Heart left ventricle (tissue), 16 donors: ENCODE measurements at regions of chr17 and their contacts with region 1.

Region 1: DNA sequence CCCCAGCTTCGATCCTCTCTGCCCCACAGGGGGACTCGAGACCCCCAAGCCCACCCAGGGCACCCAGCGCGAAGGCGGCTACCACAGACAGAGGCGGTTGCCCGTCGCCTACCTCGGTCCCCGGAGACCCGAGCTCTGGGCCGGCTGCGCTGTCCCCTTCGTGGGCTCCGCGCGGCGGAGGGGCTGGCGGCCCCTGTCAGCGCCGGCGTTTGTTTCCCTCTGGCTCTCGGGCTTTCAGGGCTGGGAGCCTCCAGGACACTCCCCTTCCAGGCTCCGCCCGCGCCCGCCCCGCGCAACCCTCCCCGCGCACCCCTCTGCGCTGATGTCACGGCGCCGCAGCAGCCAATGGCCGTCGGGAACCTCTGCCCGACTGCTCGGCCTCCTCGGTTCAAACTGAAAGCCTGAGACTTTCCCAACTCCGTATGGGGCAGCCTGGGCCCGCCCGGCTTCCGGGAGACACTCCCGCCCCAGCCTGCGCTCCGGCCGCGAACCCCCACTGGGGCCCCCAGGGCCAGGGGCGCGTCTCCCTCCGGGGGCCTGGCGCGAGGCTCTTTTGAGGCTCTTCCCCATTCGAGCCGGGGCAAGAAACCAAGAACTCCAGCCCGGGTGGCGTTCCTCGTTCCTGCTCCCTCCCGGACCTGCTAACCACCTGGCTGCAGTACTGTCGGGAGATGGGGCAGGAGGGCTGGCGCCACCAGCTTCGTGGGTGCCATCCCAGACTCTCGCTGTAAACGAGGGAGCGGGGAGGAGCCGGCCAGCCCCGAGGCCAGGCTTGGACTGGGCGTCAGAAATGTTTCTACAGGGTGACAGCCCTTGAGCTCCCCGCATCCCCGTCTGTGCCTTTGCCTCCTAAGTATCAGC is at the start of gene CDC42EP4:
- DNase-seq: peak; percentile 97 to 98 (median 98)
- ATAC-seq: peak; percentile 91 to 95 (median 92)
- H3K4me3 ChIP-seq: peak within 1 kb of the TSS; percentile 87 to 100 (median 94)
- H3K27ac ChIP-seq: peak within 1 kb of the TSS; percentile 94 to 100 (median 98)
- H3K4me1 ChIP-seq: peaks cover 6 to 46% (median 36%) of the 10 kb centered on the region in 12 donors
- H3K27me3 ChIP-seq: no peaks in the 10 kb centered on the region
- CTCF ChIP-seq: no peak
- POLR2A ChIP-seq: peak; percentile 96 to 100
- total RNA-seq, gene CDC42EP4: 21.8 to 103 (median 37.5) TPM

Region 2: DNA sequence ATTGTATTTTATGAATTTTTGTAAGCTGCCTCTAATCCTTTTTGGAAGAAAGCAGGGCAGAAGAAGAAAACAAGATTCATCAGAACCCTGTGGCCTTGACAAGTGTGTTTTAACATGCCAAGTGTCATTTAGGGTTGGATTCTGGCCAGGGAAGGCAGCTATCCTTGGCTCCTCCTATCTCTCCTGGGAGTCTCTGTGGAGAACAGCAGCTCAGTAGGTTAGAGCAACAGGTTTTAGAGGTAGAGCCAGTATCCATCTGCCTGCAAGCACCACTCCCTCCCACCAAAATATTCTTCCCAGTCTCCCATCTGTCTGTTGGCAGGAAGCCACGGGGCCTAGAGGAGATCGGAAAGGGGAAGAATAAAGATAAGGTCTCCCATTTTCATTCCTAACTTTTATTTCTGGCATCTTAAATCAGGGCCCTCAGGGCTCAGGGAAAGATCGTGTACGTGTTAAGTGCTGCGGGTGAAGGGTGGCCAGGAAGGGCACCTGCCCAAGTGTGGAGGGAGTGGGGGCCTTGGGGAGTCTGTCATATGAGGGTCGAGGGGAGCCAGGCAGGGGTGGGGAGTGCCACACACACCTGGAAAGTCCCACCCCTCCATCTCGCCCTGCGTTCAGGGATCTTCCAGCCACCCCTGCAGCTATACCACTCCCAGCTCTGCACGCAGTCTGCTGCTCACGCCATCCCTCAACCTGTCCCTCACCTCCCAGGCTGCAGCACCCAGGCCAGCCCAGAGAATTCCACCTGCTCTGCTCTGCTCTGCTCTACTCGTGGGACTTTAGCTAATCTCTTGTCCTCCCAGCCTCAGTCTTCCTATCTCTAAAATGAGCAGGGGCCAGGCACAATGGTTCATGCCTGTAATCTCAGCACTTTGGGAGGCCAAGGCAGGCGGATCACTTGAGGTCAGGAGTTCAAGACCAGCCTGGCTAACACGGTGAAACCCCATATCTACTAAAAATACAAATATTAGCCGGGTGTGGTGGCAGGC is 33.3 kb before region 1 on chr17:
- intact Hi-C with region 1: loop called in 6 of 10 experiments (anchors 5 kb)
- DNase-seq: peak in 2 of 5 donors; percentile 42 to 63
- ATAC-seq: peak; percentile 55 to 68 (median 64)
- H3K4me3 ChIP-seq: no peak overlapping the region
- H3K27ac ChIP-seq: peak overlapping the region; percentile 46 to 86 (median 72)
- H3K4me1 ChIP-seq: peaks cover 4 to 40% (median 28%) of the 10 kb centered on the region in 12 donors
- H3K27me3 ChIP-seq: no peaks in the 10 kb centered on the region
- CTCF ChIP-seq: no peak
- POLR2A ChIP-seq: no peak

Region 3: DNA sequence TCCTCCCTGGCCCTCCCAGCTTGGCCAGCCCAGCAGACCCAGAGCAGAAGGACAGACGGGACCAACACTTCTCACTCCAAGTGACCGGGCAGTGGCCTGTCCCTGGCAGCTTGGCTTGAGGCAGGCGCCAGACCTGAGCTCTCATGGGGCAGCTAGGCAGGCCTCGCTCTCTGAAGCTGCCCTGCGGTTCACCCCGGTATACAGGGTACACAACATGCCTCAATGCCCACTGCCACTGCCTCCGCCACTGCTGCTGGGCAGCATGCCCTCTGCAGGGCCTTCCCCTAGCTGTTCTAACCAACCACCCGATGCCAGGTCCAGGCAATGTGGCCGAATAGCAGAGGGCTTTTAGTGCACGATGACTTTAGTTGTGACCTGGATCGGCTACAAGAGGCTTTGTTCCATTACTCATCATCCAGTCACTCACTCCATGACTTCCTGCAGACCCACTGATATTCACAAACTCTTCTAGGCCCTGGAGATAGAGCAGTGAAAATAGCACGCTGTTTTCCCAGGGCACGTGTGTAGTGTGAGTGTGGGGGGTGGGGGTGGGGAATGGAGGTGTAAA is 20.0 kb before region 1 on chr17:
- intact Hi-C with region 1: loop called in 3 of 10 experiments (anchors 2 kb)
- DNase-seq: peak; percentile 77 to 92 (median 79)
- ATAC-seq: peak; percentile 73 to 83 (median 76)
- H3K4me3 ChIP-seq: peak overlapping the region in 5 of 12 donors; percentile 11 to 32 (median 23)
- H3K27ac ChIP-seq: peak overlapping the region; percentile 89 to 99 (median 96)
- H3K4me1 ChIP-seq: peaks cover 29 to 93% (median 83%) of the 10 kb centered on the region in 12 donors
- H3K27me3 ChIP-seq: no peaks in the 10 kb centered on the region
- CTCF ChIP-seq: peak in 1 of 12 donors; percentile 10
- POLR2A ChIP-seq: no peak

Region 4: DNA sequence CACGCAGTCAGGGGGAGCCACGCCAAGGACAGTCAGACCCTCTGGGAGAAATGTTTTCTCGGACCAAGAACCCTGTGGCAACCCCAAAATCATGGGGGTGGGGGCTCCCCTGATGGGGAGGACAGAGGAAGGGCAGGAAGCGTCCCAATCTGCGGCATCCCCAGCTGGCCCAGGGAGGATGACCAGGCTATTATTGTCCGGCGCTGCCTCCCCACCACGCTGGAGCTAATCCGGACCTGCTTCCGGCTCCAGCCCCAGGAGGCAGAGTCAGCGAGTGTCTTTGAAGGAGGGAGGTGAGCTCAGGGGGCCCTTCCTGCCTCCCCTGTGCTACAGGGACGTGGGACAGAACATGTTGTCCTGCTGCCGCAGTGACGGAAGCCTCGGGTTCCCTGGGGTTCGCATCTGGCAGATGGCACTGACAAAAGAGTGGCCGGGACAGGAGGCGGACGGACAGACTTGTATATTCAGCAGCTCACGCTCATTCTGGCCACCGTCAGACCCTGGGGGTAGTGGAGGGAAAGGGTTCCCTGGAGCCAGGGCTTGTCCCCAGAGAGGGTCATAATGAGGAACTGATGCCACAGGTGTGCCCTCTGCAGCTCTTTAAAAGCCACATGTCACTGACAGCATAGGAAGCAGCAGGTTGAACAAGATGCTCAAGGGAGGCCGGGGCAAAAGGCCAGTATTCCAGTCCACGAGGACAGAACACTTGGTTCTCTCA is 54.1 kb after region 1 on chr17:
- intact Hi-C with region 1: loop called in 8 of 10 experiments (anchors 1 to 5 kb)
- DNase-seq: peak; percentile 65 to 75 (median 73)
- ATAC-seq: peak; percentile 53 to 87 (median 69)
- H3K4me3 ChIP-seq: peak overlapping the region in 7 of 12 donors; percentile 4 to 26 (median 19)
- H3K27ac ChIP-seq: peak overlapping the region; percentile 50 to 82 (median 73)
- H3K4me1 ChIP-seq: peaks cover 0 to 35% (median 19%) of the 10 kb centered on the region in 12 donors
- H3K27me3 ChIP-seq: no peaks in the 10 kb centered on the region
- CTCF ChIP-seq: no peak
- POLR2A ChIP-seq: peak in 1 of 2 donors; percentile 47

Region 5: DNA sequence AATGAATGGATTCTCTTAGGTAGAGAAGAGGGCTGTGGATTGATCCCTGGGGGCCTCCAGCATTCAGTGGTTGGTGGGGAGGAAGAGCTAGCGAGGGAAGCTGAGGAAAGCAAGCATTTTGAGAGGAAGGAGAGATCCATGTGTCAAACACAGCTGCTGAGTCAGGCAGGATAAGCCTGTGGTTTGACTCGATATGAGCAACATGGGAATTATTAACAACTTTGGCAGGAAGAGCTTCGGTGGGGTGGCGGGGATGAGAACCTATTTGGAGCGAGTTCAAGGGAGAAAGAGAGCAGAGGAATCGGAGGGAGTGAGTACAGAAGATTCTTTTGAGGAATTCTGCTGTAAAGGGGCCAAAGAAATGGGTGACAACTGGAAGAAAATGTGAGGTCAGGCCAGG is 59.3 kb after region 1 on chr17:
- intact Hi-C with region 1: loop called in 7 of 10 experiments (anchors 1 to 5 kb)
- DNase-seq: no peak
- ATAC-seq: no peak
- H3K4me3 ChIP-seq: no peak overlapping the region
- H3K27ac ChIP-seq: no peak overlapping the region
- H3K4me1 ChIP-seq: peaks cover 0 to 17% (median 6%) of the 10 kb centered on the region in 12 donors
- H3K27me3 ChIP-seq: no peaks in the 10 kb centered on the region
- CTCF ChIP-seq: no peak
- POLR2A ChIP-seq: no peak